ENCODE measurements at regions of chr9 and their contacts with region 1.

Region 1: GRCh38 chr9:4740638-4741364 is at the start of gene AK3:
- DNase-seq: peak; percentile 93
- H3K4me3 ChIP-seq: peak within 1 kb of the TSS; percentile 85 to 97 (median 90)
- H3K27ac ChIP-seq: peak within 1 kb of the TSS; percentile 83 to 97 (median 93)
- H3K4me1 ChIP-seq: peaks cover 11 to 43% (median 38%) of the 10 kb centered on the region in 4 donors
- H3K27me3 ChIP-seq: no peaks in the 10 kb centered on the region
- CTCF ChIP-seq: peak in 2 of 3 experiments; percentile 32 to 44
- EP300 ChIP-seq: no peak
- POLR2A ChIP-seq: peak; percentile 59
- total RNA-seq, gene AK3: 90.0 to 129 (median 118) TPM

Region 2: DNA sequence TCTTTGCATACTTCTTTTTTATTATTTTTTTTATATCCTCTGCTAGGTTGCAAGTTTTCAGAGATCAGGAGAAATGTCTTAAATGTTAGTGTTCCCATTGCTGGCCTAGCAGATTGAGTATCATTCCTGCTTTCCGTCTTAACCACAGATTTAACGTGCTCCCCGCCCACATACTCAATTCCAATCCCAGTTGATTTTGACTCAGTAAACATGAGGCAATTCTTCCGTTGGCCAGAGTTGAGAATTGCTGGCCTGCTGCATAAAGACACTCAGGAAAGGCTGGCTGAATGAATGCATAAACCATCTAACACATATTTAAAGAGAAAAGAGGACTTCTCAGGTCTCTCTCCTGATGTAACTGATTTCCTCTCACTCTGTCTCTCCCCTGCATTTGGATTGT is 125.5 kb before region 1 on chr9:
- intact Hi-C with region 1: no loop called
- DNase-seq: no peak
- H3K4me3 ChIP-seq: no peak overlapping the region
- H3K27ac ChIP-seq: no peak overlapping the region
- H3K4me1 ChIP-seq: no peaks in the 10 kb centered on the region
- H3K27me3 ChIP-seq: no peaks in the 10 kb centered on the region
- CTCF ChIP-seq: no peak
- EP300 ChIP-seq: no peak
- POLR2A ChIP-seq: no peak

Region 3: GRCh38 chr9:4662108-4662988 is 78.5 kb before region 1 on chr9 and contains the start of gene PLPP6:
- intact Hi-C with region 1: loop called (anchors 2 kb)
- DNase-seq: peak; percentile 94
- H3K4me3 ChIP-seq: peak within 1 kb of the TSS; percentile 69 to 97 (median 92)
- H3K27ac ChIP-seq: peak within 1 kb of the TSS; percentile 80 to 91 (median 86)
- H3K4me1 ChIP-seq: peaks cover 20 to 54% (median 50%) of the 10 kb centered on the region in 4 donors
- H3K27me3 ChIP-seq: no peaks in the 10 kb centered on the region
- CTCF ChIP-seq: peak; percentile 65 to 74 (median 69)
- EP300 ChIP-seq: no peak
- POLR2A ChIP-seq: peak; percentile 38
- total RNA-seq, gene PLPP6: 3.8 to 6.3 (median 6.2) TPM

Region 4: DNA sequence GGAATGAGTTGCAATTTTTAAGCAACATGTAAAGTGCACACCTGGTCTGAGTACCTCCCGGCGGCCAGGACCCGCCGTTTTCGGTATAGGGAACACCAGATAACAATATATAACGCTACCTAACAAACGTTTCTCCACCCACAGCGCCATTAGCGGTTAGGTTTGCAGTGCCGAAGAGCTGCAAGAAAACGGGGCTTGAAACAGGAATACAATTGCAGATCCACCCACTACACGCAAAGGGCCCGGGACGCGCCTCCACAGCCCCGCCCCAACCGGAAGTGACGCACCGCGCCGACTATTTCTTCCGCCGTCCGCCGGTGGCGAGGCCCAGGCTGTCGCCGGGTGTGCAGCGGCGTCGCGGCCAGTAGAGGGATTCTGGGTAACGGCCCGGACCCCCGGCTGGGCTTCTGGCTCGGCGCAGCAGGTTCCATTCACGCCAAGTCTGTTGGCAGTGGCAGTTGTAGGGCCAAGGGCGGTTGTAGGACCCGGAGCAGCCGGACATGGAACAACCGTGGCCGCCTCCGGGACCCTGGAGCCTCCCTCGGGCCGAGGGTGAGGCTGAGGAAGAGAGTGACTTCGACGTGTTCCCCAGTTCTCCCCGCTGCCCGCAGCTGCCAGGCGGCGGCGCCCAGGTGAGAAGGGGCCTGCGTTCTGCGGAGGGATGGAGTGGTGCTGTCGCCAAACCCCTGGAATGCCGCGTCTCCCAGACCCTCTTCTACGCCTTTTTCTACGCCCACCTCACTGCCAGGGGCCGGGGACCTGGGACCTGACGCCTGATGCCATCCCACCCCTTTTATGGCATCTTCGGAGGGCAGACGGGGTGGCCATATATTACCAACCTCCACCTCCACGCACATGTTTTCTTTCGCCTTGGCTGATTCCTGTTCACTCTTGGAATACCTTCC is 61.3 kb before region 1 on chr9 and contains the start of gene CDC37L1:
- intact Hi-C with region 1: loop called (anchors 2 kb)
- DNase-seq: peak; percentile 99
- H3K4me3 ChIP-seq: peak within 1 kb of the TSS; percentile 80 to 97 (median 90)
- H3K27ac ChIP-seq: peak within 1 kb of the TSS; percentile 93 to 100 (median 98)
- H3K4me1 ChIP-seq: peaks cover 10 to 50% (median 41%) of the 10 kb centered on the region in 4 donors
- H3K27me3 ChIP-seq: no peaks in the 10 kb centered on the region
- CTCF ChIP-seq: peak; percentile 30 to 80 (median 66)
- EP300 ChIP-seq: no peak
- POLR2A ChIP-seq: peak; percentile 88
- total RNA-seq, gene CDC37L1: 78.3 to 115 (median 86.4) TPM

Region 5: GRCh38 chr9:4792572-4793458 is 52.0 kb after region 1 on chr9 and contains the start of gene RCL1:
- intact Hi-C with region 1: loop called (anchors 5 kb)
- DNase-seq: peak; percentile 97
- H3K4me3 ChIP-seq: peak within 1 kb of the TSS; percentile 71 to 77 (median 73)
- H3K27ac ChIP-seq: peak within 1 kb of the TSS; percentile 73 to 85 (median 78)
- H3K4me1 ChIP-seq: peaks cover 13 to 31% (median 25%) of the 10 kb centered on the region in 4 donors
- H3K27me3 ChIP-seq: no peaks in the 10 kb centered on the region
- CTCF ChIP-seq: no peak
- EP300 ChIP-seq: no peak
- POLR2A ChIP-seq: peak; percentile 56
- total RNA-seq, gene RCL1: 13.4 to 19.1 (median 14.9) TPM

Region 6: GRCh38 chr9:4805191-4805918 is 64.6 kb after region 1 on chr9:
- intact Hi-C with region 1: no loop called
- DNase-seq: no peak
- H3K4me3 ChIP-seq: no peak overlapping the region
- H3K27ac ChIP-seq: no peak overlapping the region
- H3K4me1 ChIP-seq: no peaks in the 10 kb centered on the region
- H3K27me3 ChIP-seq: no peaks in the 10 kb centered on the region
- CTCF ChIP-seq: no peak
- EP300 ChIP-seq: no peak
- POLR2A ChIP-seq: no peak

Measured in esophagus muscularis mucosa (tissue), 4 donors.